ENCODE measurements at regions of chr18 and their contacts with region 1.

Region 1: GRCh38 chr18:56267334-56267733 is 371.1 kb downstream of the TXNL1 start:
- DNase-seq: no peak
- H3K4me3 ChIP-seq: no peak overlapping the region
- H3K27ac ChIP-seq: no peak overlapping the region
- H3K4me1 ChIP-seq: no peaks in the 10 kb centered on the region
- H3K27me3 ChIP-seq: no peaks in the 10 kb centered on the region
- CTCF ChIP-seq: no peak

Region 2: GRCh38 chr18:56368066-56368465 is 100.7 kb after region 1 on chr18:
- intact Hi-C with region 1: loop called (anchors 10 kb)
- DNase-seq: no peak
- H3K4me3 ChIP-seq: no peak overlapping the region
- H3K27ac ChIP-seq: no peak overlapping the region
- H3K4me1 ChIP-seq: no peaks in the 10 kb centered on the region
- H3K27me3 ChIP-seq: no peaks in the 10 kb centered on the region
- CTCF ChIP-seq: no peak